B cell (primary cell): ENCODE measurements at regions of chr20 and their contacts with region 1.

Region 1: GRCh38 chr20:64038565-64039292 is 2.7 kb downstream of the C20orf204 start:
- DNase-seq: peak; percentile 84
- ATAC-seq: peak; percentile 86
- H3K4me3 ChIP-seq: peak overlapping the region in 4 of 5 experiments; percentile 64 to 85 (median 66)
- H3K4me3 Mint-ChIP-seq: peak overlapping the region; percentile 80
- H3K27ac ChIP-seq: peak overlapping the region in 1 of 2 donors; percentile 28
- H3K27ac Mint-ChIP-seq: peak overlapping the region; percentile 20
- H3K4me1 ChIP-seq: peaks cover 31 to 32% of the 10 kb centered on the region in 2 donors
- H3K4me1 Mint-ChIP-seq: peaks cover 23% of the 10 kb centered on the region
- H3K27me3 ChIP-seq: peaks cover 0 to 23% (median 11%) of the 10 kb centered on the region in 4 experiments
- H3K27me3 Mint-ChIP-seq: peaks cover 11% of the 10 kb centered on the region
- CTCF ChIP-seq: peak; percentile 79

Region 2: DNA sequence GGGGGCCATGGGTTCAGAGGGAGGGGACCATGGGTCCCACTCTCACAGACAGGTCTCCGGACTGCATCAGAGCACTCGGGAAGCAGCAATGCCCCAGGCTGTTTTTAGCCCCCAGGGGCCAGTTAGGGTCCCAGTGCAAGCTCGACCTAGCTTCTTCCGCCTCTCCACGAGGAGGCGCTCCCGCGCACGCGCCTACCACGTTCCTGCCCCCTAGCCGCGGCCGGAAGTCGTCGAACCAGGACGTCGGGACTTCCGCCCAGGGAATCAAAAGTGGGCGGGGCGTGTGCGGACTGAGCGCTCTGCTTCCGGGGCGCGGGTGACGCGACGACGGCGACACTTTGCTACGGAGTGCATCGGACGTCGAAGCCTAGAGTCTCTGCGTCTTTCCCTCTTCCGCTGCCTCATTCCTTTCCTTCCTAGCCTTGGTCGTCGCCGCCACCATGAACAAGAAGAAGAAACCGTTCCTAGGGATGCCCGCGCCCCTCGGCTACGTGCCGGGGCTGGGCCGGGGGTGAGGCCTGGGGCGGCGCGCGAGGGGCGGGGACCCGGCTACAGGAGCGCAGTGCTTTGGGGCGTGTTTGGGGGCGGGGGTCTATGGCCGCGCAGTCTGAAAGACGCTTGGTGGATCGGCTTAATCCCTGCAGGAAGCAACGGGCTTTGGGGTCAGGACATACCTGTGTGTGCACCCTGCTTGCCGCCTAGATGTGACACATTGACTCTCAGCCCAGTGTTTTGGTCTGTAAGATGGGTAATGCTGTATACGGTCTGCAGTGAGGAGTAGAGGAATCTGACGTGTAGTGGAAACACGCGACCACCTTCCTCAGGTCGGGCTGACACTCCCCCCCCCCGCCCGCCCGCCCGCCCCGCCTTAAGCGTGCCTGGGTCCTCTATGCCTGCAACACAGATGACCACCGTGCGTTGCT is 57.7 kb before region 1 on chr20 and contains the start of gene PRPF6:
- CTCF ChIA-PET with region 1: interaction called, 5 read pairs
- POLR2A ChIA-PET with region 1: interaction called, 6 read pairs
- intact Hi-C with region 1: loop called (anchors 2 kb)
- DNase-seq: peak; percentile 96
- ATAC-seq: peak; percentile 72
- H3K4me3 ChIP-seq: peak within 1 kb of the TSS; percentile 63 to 85 (median 79)
- H3K4me3 Mint-ChIP-seq: peak within 1 kb of the TSS; percentile 90
- H3K27ac ChIP-seq: peak within 1 kb of the TSS; percentile 69 to 87
- H3K27ac Mint-ChIP-seq: peak within 1 kb of the TSS; percentile 94
- H3K4me1 ChIP-seq: peaks cover 30 to 46% of the 10 kb centered on the region in 2 donors
- H3K4me1 Mint-ChIP-seq: peaks cover 53% of the 10 kb centered on the region
- H3K27me3 ChIP-seq: no peaks in the 10 kb centered on the region
- H3K27me3 Mint-ChIP-seq: no peaks in the 10 kb centered on the region
- CTCF ChIP-seq: peak; percentile 86
- total RNA-seq, gene PRPF6: 79.7 and 82.9 TPM in 2 replicates

Region 3: GRCh38 chr20:64027981-64028685 is 10.6 kb before region 1 on chr20:
- CTCF ChIA-PET with region 1: interaction called, 12 read pairs
- POLR2A ChIA-PET with region 1: no interaction called
- intact Hi-C with region 1: no loop called
- DNase-seq: no peak
- ATAC-seq: no peak
- H3K4me3 ChIP-seq: no peak overlapping the region
- H3K4me3 Mint-ChIP-seq: no peak overlapping the region
- H3K27ac ChIP-seq: no peak overlapping the region
- H3K27ac Mint-ChIP-seq: no peak overlapping the region
- H3K4me1 ChIP-seq: no peaks in the 10 kb centered on the region
- H3K4me1 Mint-ChIP-seq: no peaks in the 10 kb centered on the region
- H3K27me3 ChIP-seq: no peaks in the 10 kb centered on the region
- H3K27me3 Mint-ChIP-seq: no peaks in the 10 kb centered on the region
- CTCF ChIP-seq: no peak

Region 4: DNA sequence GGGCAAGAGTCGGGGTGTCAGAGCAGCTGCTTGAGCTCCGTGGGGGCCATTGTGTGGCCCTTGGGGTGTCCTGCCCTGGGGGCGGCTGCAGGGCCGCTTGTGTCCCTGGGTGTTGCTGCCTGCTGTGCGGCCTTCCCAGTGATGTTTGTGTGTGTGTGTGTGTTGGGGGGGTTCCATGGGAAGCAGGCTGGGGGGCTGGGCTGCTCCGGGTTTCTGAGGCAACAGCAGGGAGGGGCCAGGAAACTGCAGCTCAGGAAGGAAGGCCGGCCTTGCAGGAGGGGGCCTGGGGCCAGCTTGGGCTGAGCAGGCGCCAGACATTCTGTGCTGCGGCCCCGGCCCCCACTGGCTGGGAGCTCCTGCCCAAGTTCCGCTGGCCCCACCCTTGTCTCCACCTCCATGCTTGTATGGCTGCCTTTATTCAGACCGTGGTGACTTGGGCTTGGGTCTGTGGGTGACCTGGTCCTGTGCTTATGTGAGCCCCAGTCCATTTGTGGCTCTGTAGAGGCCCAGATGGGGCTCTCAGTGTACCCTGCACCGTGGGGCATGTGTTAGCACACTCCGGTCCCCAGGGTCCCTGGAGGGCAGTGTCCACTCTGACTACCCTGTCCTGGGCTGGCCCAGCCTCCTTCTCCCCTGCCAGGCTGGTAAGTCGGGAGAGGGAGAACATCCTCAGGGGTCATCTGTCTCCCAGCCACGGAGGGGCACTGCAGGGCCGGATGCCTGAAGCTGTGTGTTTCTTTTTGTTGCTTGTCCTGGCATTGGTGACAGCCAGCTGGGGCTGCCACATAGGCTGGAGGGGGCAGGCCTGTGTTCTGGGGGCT is 15.3 kb after region 1 on chr20:
- CTCF ChIA-PET with region 1: interaction called, 22 read pairs
- POLR2A ChIA-PET with region 1: no interaction called
- intact Hi-C with region 1: loop called (anchors 1 kb)
- DNase-seq: no peak
- ATAC-seq: no peak
- H3K4me3 ChIP-seq: no peak overlapping the region
- H3K4me3 Mint-ChIP-seq: no peak overlapping the region
- H3K27ac ChIP-seq: no peak overlapping the region
- H3K27ac Mint-ChIP-seq: no peak overlapping the region
- H3K4me1 ChIP-seq: peaks cover 20 to 26% of the 10 kb centered on the region in 2 donors
- H3K4me1 Mint-ChIP-seq: peaks cover 18% of the 10 kb centered on the region
- H3K27me3 ChIP-seq: peaks cover 0 to 68% (median 27%) of the 10 kb centered on the region in 4 experiments
- H3K27me3 Mint-ChIP-seq: peaks cover 27% of the 10 kb centered on the region
- CTCF ChIP-seq: no peak

Region 5: DNA sequence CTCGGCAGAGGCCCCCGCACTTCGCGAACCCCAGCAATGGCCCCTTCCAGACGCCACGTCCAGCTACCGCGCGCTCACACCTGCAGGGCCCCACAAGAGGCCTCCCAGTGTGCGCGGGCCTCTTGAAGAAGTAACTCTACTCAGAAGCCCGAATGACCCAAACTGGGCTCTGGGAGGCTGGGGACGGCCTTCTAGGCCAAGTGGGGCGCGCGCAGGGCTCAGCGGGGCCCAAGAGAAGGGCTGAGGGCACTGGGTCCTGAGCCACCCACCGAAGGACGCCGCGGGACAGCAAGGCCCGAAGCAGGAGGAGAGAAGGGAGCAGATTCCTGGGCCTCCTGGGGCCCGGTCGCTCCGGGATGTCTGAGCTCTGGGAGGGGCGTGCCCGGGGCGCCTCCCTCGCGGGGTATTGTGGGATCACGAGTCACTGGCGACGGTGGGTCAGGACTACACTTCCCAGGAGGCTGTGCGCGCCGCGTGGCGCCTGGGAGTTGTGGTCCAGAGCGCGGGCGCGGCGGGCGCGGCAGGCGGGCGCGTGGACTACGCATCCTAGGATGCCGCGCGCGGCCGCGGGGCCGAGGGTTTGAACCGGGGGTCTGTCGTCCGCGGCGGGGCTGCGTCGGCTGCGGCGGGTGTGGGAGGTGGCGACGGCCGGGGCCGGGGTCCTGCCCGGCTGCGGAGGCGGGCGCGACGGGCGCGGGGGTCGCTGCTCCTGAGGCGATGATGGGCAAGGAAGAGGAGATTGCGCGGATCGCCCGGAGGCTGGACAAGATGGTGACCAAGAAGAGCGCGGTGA is 24.1 kb after region 1 on chr20 and contains the start of gene TCEA2:
- CTCF ChIA-PET with region 1: interaction called, 22 read pairs
- POLR2A ChIA-PET with region 1: interaction called, 3 read pairs
- intact Hi-C with region 1: loop called (anchors 1 kb)
- DNase-seq: peak; percentile 93
- ATAC-seq: peak; percentile 83
- H3K4me3 ChIP-seq: peak within 1 kb of the TSS in 4 of 5 experiments; percentile 63 to 79 (median 70)
- H3K4me3 Mint-ChIP-seq: peak within 1 kb of the TSS; percentile 88
- H3K27ac ChIP-seq: peak within 1 kb of the TSS; percentile 34 to 69
- H3K27ac Mint-ChIP-seq: peak within 1 kb of the TSS; percentile 86
- H3K4me1 ChIP-seq: peaks cover 54 to 63% of the 10 kb centered on the region in 2 donors
- H3K4me1 Mint-ChIP-seq: peaks cover 52% of the 10 kb centered on the region
- H3K27me3 ChIP-seq: no peaks in the 10 kb centered on the region
- H3K27me3 Mint-ChIP-seq: no peaks in the 10 kb centered on the region
- CTCF ChIP-seq: no peak
- total RNA-seq, gene TCEA2: 49.3 and 58.1 TPM in 2 replicates

Region 6: GRCh38 chr20:64101731-64102621 is 63.2 kb after region 1 on chr20:
- CTCF ChIA-PET with region 1: interaction called, 9 read pairs
- POLR2A ChIA-PET with region 1: no interaction called
- intact Hi-C with region 1: loop called (anchors 5 kb)
- DNase-seq: peak; percentile 84
- ATAC-seq: peak; percentile 32
- H3K4me3 ChIP-seq: peak overlapping the region in 4 of 5 experiments; percentile 24 to 59 (median 55)
- H3K4me3 Mint-ChIP-seq: peak overlapping the region; percentile 92
- H3K27ac ChIP-seq: peak overlapping the region in 1 of 2 donors; percentile 89
- H3K27ac Mint-ChIP-seq: peak overlapping the region; percentile 95
- H3K4me1 ChIP-seq: peaks cover 27 to 43% of the 10 kb centered on the region in 2 donors
- H3K4me1 Mint-ChIP-seq: peaks cover 38% of the 10 kb centered on the region
- H3K27me3 ChIP-seq: peaks cover 0 to 21% (median 5%) of the 10 kb centered on the region in 4 experiments
- H3K27me3 Mint-ChIP-seq: no peaks in the 10 kb centered on the region
- CTCF ChIP-seq: peak; percentile 84